ENCODE measurements at regions of chr9 and their contacts with region 1.

Region 1: GRCh38 chr9:4740638-4741364 is at the start of gene AK3:
- DNase-seq: peak; percentile 82 to 87 (median 84)
- H3K4me3 ChIP-seq: peak within 1 kb of the TSS; percentile 79 to 84
- H3K4me3 Mint-ChIP-seq: peak within 1 kb of the TSS; percentile 91 to 97 (median 94)
- H3K27ac ChIP-seq: peak within 1 kb of the TSS; percentile 78
- H3K27ac Mint-ChIP-seq: peak within 1 kb of the TSS; percentile 65 to 96 (median 94)
- H3K4me1 ChIP-seq: peaks cover 29% of the 10 kb centered on the region
- H3K4me1 Mint-ChIP-seq: peaks cover 20 to 44% (median 32%) of the 10 kb centered on the region in 4 donors
- H3K27me3 ChIP-seq: no peaks in the 10 kb centered on the region
- H3K27me3 Mint-ChIP-seq: no peaks in the 10 kb centered on the region
- total RNA-seq, gene AK3: 23.1 to 25.2 TPM

Region 2: GRCh38 chr9:4382722-4383317 is 358.0 kb before region 1 on chr9:
- CTCF ChIA-PET with region 1: no interaction called
- POLR2A ChIA-PET with region 1: no interaction called
- intact Hi-C with region 1: loop called (anchors 5 kb)
- DNase-seq: peak in 4 of 5 donors; percentile 9 to 29 (median 25)
- H3K4me3 ChIP-seq: no peak overlapping the region
- H3K4me3 Mint-ChIP-seq: no peak overlapping the region
- H3K27ac ChIP-seq: no peak overlapping the region
- H3K27ac Mint-ChIP-seq: no peak overlapping the region
- H3K4me1 ChIP-seq: no peaks in the 10 kb centered on the region
- H3K4me1 Mint-ChIP-seq: no peaks in the 10 kb centered on the region
- H3K27me3 ChIP-seq: no peaks in the 10 kb centered on the region
- H3K27me3 Mint-ChIP-seq: peaks cover 1 to 7% of the 10 kb centered on the region in 2 donors

Region 3: DNA sequence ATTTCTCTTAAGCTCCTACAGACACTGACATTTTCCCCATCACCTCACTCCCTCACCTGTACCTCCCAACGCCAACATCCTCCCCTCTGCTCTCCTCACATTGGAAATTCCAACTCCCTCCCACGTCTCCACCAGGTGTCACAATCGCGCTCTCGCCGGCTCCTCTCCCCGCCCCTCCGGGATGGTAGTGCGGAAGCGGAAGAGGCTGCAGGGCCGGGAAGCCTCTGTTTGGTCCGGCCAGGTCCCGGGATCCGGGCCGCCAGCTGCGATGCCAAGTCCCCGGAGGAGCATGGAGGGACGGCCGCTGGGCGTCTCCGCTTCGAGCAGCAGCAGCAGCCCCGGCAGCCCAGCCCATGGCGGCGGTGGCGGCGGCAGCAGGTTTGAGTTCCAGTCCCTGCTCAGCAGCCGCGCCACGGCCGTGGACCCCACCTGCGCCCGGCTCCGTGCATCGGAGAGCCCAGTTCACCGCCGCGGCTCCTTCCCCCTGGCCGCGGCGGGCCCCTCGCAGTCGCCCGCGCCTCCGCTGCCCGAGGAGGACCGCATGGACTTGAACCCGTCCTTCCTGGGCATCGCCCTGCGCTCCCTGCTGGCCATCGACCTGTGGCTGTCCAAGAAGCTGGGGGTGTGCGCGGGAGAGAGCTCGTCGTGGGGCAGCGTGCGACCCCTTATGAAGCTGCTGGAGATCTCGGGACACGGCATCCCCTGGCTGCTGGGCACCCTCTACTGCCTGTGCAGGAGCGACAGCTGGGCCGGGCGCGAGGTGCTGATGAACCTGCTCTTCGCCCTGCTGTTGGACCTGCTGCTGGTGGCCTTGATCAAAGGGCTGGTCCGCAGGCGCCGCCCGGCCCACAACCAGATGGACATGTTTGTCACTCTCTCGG is 78.5 kb before region 1 on chr9 and contains the start of gene PLPP6:
- CTCF ChIA-PET with region 1: interaction called, 8 read pairs
- POLR2A ChIA-PET with region 1: interaction called, 18 read pairs
- intact Hi-C with region 1: loop called (anchors 1 kb)
- DNase-seq: peak; percentile 70 to 86 (median 76)
- H3K4me3 ChIP-seq: peak within 1 kb of the TSS; percentile 42 to 83
- H3K4me3 Mint-ChIP-seq: peak within 1 kb of the TSS; percentile 91 to 99 (median 96)
- H3K27ac ChIP-seq: peak within 1 kb of the TSS; percentile 67
- H3K27ac Mint-ChIP-seq: peak within 1 kb of the TSS; percentile 95 to 99 (median 96)
- H3K4me1 ChIP-seq: peaks cover 58% of the 10 kb centered on the region
- H3K4me1 Mint-ChIP-seq: peaks cover 47 to 78% (median 59%) of the 10 kb centered on the region in 4 donors
- H3K27me3 ChIP-seq: no peaks in the 10 kb centered on the region
- H3K27me3 Mint-ChIP-seq: no peaks in the 10 kb centered on the region
- total RNA-seq, gene PLPP6: 23.3 to 23.8 TPM

Region 4: DNA sequence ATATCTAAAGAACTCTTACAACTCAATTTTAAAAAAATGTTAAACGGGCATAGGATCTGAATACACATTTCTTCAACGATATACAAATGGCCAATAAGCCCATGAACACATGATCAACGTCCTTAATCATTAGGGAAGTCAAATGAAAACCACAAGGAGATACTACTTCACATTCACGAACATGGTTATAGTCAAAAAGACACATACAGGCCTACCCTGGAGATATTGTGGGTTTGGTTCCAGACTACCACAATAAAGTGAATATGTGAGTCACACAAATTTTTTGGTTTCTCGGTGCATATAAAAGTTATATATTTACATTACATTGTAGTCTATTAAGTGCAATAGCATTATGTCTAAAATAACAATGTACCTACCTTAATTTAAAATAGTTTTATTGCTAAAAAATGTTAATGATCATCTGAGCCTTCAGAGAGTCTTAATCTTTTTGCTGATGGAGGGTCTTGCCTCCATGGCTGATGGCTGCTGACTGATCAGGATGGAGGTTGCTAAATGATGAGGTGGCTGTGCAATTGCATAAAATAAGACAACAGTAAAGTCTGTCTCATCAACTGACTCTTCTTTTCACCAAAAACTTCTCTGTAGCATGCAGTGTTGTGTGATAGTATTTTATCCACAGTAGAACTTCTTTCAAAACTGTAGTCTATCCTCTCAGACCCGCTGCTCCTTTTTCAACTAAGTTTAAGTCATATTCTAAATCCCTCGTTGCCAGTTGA is 14.9 kb before region 1 on chr9:
- CTCF ChIA-PET with region 1: interaction called, 4 read pairs
- POLR2A ChIA-PET with region 1: interaction called, 6 read pairs
- intact Hi-C with region 1: loop called (anchors 2 kb)
- DNase-seq: no peak
- H3K4me3 ChIP-seq: no peak overlapping the region
- H3K4me3 Mint-ChIP-seq: peak overlapping the region in 1 of 8 donors; percentile 18
- H3K27ac ChIP-seq: no peak overlapping the region
- H3K27ac Mint-ChIP-seq: peak overlapping the region in 1 of 7 donors; percentile 3
- H3K4me1 ChIP-seq: no peaks in the 10 kb centered on the region
- H3K4me1 Mint-ChIP-seq: peaks cover 15 to 31% (median 25%) of the 10 kb centered on the region in 4 donors
- H3K27me3 ChIP-seq: no peaks in the 10 kb centered on the region
- H3K27me3 Mint-ChIP-seq: no peaks in the 10 kb centered on the region

Region 5: DNA sequence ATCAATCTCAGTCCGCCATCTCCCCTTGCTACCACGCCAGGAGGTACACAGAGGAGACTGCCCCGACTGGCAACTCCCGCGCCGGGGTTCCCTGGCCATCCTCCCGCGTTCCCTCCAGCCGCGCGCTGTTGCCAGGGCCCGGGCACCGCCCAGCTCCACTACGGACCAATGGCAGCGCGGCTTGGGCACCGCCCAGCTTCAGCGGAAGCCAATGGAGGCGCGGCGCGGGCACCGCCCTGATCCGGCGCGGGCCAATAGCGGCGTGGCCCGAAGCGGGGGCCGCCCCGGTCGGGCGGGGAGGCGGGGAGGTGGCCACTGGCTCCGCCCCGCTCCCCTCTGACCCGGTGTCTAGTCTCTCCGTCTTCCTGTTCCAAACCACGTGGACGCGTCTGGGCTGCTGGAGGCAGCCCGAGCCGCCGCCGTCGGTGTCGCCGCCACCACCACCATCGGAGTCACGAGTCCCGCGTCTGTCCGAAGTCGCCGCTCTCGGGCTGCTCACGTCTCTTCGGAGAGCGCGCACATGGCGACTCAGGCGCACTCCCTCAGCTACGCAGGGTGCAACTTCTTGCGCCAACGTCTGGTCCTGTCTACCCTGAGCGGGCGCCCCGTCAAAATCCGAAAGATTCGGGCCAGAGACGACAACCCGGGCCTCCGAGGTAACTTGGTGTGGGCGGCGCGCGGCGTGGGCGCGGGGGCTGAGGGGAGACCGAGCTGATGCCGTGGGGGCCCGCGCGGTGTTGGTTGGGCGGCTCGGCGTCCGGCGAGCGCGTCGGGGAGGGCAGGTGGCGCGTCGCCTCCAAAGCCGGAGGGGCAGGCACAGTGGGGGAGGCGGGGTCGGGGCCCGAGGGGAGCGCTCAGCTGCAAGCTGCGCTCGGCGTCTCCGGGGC is 52.0 kb after region 1 on chr9 and contains the start of gene RCL1:
- CTCF ChIA-PET with region 1: interaction called, 4 read pairs
- POLR2A ChIA-PET with region 1: interaction called, 33 read pairs
- intact Hi-C with region 1: loop called (anchors 1 kb)
- DNase-seq: peak; percentile 95 to 98 (median 97)
- H3K4me3 ChIP-seq: peak within 1 kb of the TSS; percentile 83 to 88
- H3K4me3 Mint-ChIP-seq: peak within 1 kb of the TSS; percentile 93 to 97 (median 95)
- H3K27ac ChIP-seq: peak within 1 kb of the TSS; percentile 70
- H3K27ac Mint-ChIP-seq: peak within 1 kb of the TSS; percentile 84 to 97 (median 96)
- H3K4me1 ChIP-seq: peaks cover 23% of the 10 kb centered on the region
- H3K4me1 Mint-ChIP-seq: peaks cover 29 to 52% (median 38%) of the 10 kb centered on the region in 4 donors
- H3K27me3 ChIP-seq: no peaks in the 10 kb centered on the region
- H3K27me3 Mint-ChIP-seq: peaks cover 0 to 4% of the 10 kb centered on the region in 2 donors
- total RNA-seq, gene RCL1: 15.2 to 17.8 TPM

Measured in CD4-positive, alpha-beta memory T cell (primary cell).